ENCODE measurements at regions of chr3 and their contacts with region 1.

Region 1: DNA sequence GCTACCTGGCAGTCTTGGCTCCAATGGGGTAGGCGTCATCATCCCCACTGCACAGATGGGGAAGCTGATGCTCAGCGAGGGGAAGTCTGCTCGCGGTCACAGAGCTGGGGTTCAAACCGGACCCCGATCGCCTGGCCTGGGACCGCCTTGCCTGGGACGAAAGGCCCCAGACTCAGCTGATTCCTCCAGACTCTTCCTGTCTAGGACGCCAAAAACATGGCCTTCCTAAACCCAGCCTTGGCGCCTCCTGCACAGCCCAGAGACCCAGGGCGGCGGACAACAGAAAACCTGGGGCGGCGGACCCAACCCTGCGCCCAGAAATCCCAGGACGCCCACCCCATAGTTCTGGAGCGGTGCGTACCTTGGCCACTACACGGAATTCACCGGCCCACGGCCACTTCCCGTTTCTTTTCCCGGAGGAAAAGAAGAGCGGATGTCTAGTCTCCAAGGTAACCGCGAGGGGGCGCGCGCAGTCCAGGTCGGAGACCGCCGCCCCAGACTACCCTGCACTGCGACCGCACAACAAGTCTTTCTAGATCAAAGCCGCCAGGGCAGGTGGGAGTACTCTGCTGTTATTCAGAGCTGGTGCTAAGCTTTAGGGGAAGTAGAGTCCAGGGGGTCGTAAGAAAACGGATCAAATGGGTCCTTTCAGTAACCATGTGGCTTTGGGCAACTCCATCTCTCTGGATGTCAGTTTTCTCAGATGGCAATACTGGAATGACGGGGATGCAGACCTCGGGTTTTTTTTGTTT is 4.9 kb upstream of the IL17RD start:
- DNase-seq: no peak
- H3K4me3 ChIP-seq: peak overlapping the region; percentile 50
- CTCF ChIP-seq: peak; percentile 85

Region 2: DNA sequence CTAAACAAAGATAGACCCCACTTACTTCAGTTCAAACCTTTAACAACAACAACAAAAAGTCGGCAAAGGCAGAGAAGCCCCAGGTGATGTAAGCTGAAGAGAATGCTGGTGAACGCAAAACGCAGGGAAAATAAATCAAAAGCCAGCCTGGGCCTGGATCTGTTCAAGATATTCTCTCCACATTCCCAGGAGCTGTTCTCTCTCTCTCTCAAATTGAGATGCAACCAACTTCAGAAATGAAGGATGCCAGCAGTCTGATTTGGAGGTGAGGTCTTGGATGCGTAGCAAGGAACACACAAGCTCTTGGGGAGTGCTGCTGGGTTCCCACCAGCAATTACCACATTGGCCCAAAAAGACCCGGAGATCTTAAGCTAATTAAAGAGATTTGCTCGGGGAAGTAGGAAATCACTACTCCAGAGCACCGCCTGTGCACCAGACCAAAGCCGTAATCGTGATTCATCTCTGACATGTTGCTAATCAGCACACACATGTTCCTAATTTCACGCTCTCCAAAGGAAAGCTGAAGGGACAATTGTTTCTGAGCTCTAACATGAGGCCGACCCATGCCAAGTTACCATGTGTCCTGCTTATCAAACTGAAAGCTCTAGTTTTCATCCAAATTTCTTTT is 42.0 kb before region 1 on chr3:
- CTCF ChIA-PET with region 1: interaction called, 10 read pairs
- POLR2A ChIA-PET with region 1: no interaction called
- DNase-seq: no peak
- H3K4me3 ChIP-seq: peak overlapping the region; percentile 23; the same call in 1 of the 2 replicates
- CTCF ChIP-seq: no peak

Region 3: GRCh38 chr3:57158813-57159738 is 11.0 kb before region 1 on chr3:
- CTCF ChIA-PET with region 1: interaction called, 39 read pairs
- POLR2A ChIA-PET with region 1: no interaction called
- DNase-seq: no peak
- H3K4me3 ChIP-seq: no peak overlapping the region
- CTCF ChIP-seq: no peak

Region 4: GRCh38 chr3:57199895-57200297 is 29.8 kb after region 1 on chr3 and contains the start of gene HESX1:
- CTCF ChIA-PET with region 1: interaction called, 28 read pairs
- POLR2A ChIA-PET with region 1: interaction called, 3 read pairs
- DNase-seq: no peak
- H3K4me3 ChIP-seq: no peak within 1 kb of the TSS
- CTCF ChIP-seq: no peak

Region 5: GRCh38 chr3:57227204-57227929 is 57.3 kb after region 1 on chr3 and contains the start of gene APPL1:
- CTCF ChIA-PET with region 1: interaction called, 24 read pairs
- POLR2A ChIA-PET with region 1: no interaction called
- DNase-seq: peak; percentile 33
- H3K4me3 ChIP-seq: peak within 1 kb of the TSS; percentile 92
- CTCF ChIP-seq: no peak

Measured in AG04449 (cell line).